HCT116 (cell line): ENCODE measurements at regions of chrX and their contacts with region 1.

Region 1: DNA sequence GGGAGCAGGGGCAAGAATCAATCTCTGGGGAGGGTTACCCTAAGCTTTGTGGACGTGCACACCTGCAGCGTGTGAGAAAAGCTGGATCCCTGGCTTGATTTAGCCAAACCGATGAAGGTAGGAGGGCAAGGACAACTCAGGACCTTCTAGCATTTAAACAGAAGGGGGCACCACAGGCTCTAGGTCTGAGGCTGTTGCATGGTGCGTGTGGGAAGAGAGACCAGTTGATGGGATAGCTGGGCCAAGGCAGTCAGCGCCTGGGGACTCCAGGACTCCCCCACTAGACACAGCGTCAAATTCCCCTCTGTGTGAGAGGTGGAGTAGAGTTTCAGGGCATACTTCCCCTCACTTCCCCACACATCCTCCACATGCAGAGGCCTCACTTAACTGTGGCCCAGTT is 4.3 kb downstream of the GABRQ start:
- DNase-seq: no peak
- ATAC-seq: no peak; the same call in 1 of the 2 replicates
- H3K4me3 ChIP-seq: no peak overlapping the region
- H3K27ac ChIP-seq: no peak overlapping the region
- H3K4me1 ChIP-seq: peaks cover 0 to 12% of the 10 kb centered on the region in 2 experiments; a peak in 2 of 4 replicates
- H3K27me3 ChIP-seq: no peaks in the 10 kb centered on the region
- CTCF ChIP-seq: peak; percentile 11 to 28 (median 28); a peak in 3 of 6 replicates
- POLR2A ChIP-seq: no peak
- RAD21 ChIP-seq: peak; percentile 53

Region 2: GRCh38 chrX:152821145-152821765 is 179.3 kb after region 1 on chrX:
- CTCF ChIA-PET with region 1: interaction called, 10 read pairs
- POLR2A ChIA-PET with region 1: no interaction called
- RAD21 ChIA-PET with region 1: no interaction called
- intact Hi-C with region 1: loop called (anchors 1 kb)
- DNase-seq: peak; percentile 18
- ATAC-seq: peak; percentile 83
- H3K4me3 ChIP-seq: no peak overlapping the region
- H3K27ac ChIP-seq: no peak overlapping the region
- H3K4me1 ChIP-seq: no peaks in the 10 kb centered on the region
- H3K27me3 ChIP-seq: no peaks in the 10 kb centered on the region
- CTCF ChIP-seq: peak; percentile 45 to 74 (median 68); a peak in 5 of 6 replicates
- POLR2A ChIP-seq: no peak
- RAD21 ChIP-seq: peak; percentile 69